Caco-2 (cell line): ENCODE measurements at regions of chr6 and their contacts with region 1.

Region 1: DNA sequence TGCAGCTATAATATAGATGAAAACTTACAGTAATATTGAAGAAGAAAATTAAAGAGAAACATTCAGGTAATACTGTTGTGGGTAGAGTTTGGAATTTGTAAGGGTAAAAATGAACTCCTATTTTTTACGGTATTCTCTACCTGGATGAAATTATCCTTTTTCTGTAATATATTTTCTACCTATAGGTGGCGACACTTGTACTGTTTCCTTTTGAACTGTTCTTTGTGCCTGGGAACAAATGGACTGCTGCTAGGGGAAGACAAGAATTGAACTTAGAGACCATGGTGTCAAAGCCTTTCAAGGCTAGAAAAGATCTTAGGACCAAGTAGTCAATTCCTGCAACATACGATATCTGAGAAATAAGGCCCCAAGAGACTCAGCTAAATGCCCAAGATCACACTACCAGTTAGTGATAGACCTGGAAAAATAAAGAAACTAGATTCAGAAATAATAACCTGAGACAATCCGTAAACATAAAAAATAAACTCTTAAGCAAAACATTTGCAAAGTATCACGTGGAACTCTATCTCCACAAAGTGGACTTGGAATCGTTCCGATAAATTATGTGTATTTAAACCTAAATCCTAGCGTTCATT is 383.8 kb downstream of the TFAP2A start:
- DNase-seq: peak in 1 of 2 experiments; percentile 11
- H3K4me3 ChIP-seq: no peak overlapping the region
- H3K4me3 Mint-ChIP-seq: no peak overlapping the region
- H3K27ac Mint-ChIP-seq: no peak overlapping the region
- H3K4me1 ChIP-seq: peaks cover 18% of the 10 kb centered on the region
- H3K4me1 Mint-ChIP-seq: peaks cover 6% of the 10 kb centered on the region
- H3K27me3 ChIP-seq: no peaks in the 10 kb centered on the region
- H3K27me3 Mint-ChIP-seq: no peaks in the 10 kb centered on the region
- CTCF ChIP-seq: peak in 1 of 2 experiments; percentile 62

Region 2: DNA sequence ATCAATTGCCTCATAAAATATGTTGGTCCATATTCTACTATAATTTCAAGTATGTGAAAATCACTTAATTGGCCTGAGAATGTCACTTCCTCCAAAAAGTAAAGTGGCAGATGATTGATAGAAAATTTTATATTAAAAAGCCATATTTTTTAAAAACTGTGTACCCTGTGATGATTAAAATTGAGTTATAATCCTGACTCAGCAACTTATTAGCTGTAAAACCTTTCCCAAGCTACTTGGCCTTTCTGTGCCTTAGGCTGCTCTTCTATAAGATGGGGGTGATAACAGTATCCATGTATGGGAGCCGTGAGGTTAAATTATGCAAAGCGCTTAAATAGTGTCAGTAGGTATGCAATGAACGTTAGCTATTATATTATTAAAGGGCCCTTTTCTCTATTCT is 140.6 kb before region 1 on chr6:
- CTCF ChIA-PET with region 1: no interaction called
- POLR2A ChIA-PET with region 1: no interaction called
- intact Hi-C with region 1: no loop called
- DNase-seq: no peak
- H3K4me3 ChIP-seq: no peak overlapping the region
- H3K4me3 Mint-ChIP-seq: no peak overlapping the region
- H3K27ac Mint-ChIP-seq: no peak overlapping the region
- H3K4me1 ChIP-seq: no peaks in the 10 kb centered on the region
- H3K4me1 Mint-ChIP-seq: no peaks in the 10 kb centered on the region
- H3K27me3 ChIP-seq: no peaks in the 10 kb centered on the region
- H3K27me3 Mint-ChIP-seq: no peaks in the 10 kb centered on the region
- CTCF ChIP-seq: no peak

Region 3: DNA sequence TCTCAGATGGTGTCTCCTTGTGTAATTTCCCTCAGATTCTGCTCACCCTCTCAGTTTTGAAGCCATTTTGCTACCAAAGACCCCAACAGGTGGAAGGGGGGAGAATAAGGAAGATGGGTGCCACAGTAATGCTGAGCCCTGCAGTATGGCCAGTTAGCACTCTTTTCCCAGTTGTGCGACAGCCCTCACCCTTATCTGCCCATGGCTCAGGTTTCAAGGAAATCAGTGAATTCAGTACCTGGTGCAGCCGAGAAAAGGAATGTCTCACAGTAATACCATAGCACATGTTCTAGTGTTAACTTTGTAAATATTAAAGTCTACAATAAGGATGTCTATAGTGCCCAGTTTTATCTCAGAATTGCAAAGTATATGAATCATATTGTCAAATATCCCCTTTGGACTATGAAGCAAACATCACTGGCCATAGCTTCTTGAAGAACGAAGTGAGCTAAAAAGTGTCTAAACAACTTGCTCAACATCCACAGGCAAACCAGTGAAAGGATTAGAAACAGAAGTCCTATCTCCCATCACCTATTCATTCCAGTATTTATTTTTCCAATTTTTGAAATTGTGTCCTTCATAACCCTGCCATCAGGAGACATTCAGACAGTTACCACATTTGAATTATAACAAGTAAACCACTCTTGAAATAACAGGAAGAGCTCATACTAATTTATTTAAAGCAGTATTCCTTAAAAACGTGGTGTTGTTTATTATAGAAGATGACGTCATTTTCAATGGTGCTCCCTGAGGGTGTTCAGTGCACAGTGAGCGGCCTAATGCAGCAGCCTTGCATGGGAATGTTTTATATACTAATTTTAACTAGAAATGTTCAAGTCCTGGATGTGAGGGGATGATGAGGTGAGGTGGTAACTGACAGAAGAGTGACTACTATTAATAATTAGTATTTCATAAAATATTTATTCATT is 17.6 kb after region 1 on chr6:
- CTCF ChIA-PET with region 1: no interaction called
- POLR2A ChIA-PET with region 1: no interaction called
- intact Hi-C with region 1: loop called (anchors 1 kb)
- DNase-seq: peak; percentile 56 to 70
- H3K4me3 ChIP-seq: no peak overlapping the region
- H3K4me3 Mint-ChIP-seq: peak overlapping the region; percentile 46
- H3K27ac Mint-ChIP-seq: peak overlapping the region; percentile 65
- H3K4me1 ChIP-seq: peaks cover 27% of the 10 kb centered on the region
- H3K4me1 Mint-ChIP-seq: peaks cover 11% of the 10 kb centered on the region
- H3K27me3 ChIP-seq: no peaks in the 10 kb centered on the region
- H3K27me3 Mint-ChIP-seq: no peaks in the 10 kb centered on the region
- CTCF ChIP-seq: no peak

Region 4: DNA sequence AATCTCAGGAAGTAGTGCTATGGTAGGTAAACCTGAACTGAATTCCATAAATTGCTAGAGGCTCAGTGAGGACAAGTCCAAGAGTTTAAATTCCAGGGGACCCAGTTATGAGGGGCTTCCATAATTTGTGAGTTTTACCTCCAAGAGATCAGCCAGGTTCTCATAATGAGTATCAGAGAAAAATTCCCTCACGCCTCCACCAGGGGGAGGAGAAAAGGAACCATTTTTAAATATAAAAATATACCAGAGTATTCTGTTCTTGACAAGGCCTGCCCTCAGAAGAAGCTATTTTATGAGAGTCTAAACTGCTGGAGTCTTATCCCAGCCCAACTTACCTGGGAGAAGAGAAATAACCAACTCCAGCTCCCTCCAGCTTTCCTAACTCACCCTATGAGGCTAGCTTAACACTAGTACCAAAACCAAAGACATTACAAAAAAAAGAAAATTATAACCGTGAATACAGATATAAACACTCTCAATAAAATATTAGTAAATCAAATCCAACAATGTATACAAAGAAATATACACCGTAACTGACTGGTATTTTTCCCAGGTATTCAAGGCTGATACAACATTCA is 225.2 kb after region 1 on chr6:
- CTCF ChIA-PET with region 1: no interaction called
- POLR2A ChIA-PET with region 1: no interaction called
- intact Hi-C with region 1: loop called (anchors 10 kb)
- DNase-seq: peak in 1 of 2 experiments; percentile 16
- H3K4me3 ChIP-seq: no peak overlapping the region
- H3K4me3 Mint-ChIP-seq: no peak overlapping the region
- H3K27ac Mint-ChIP-seq: no peak overlapping the region
- H3K4me1 ChIP-seq: peaks cover 7% of the 10 kb centered on the region; the same call in 1 of the 2 replicates
- H3K4me1 Mint-ChIP-seq: peaks cover under 1% of the 10 kb centered on the region
- H3K27me3 ChIP-seq: no peaks in the 10 kb centered on the region
- H3K27me3 Mint-ChIP-seq: no peaks in the 10 kb centered on the region
- CTCF ChIP-seq: peak; percentile 40 to 54